CD4-positive, alpha-beta memory T cell (primary cell): ENCODE measurements at regions of chr18 and their contacts with region 1.

Region 1: GRCh38 chr18:58768293-58768974 is 96.2 kb upstream of the ZNF532 start:
- DNase-seq: peak in 4 of 5 donors; percentile 53 to 61 (median 57)
- H3K4me3 ChIP-seq: peak overlapping the region in 1 of 2 donors; percentile 12
- H3K4me3 Mint-ChIP-seq: peak overlapping the region in 7 of 8 donors; percentile 62 to 83 (median 67)
- H3K27ac ChIP-seq: no peak overlapping the region
- H3K27ac Mint-ChIP-seq: no peak overlapping the region
- H3K4me1 ChIP-seq: peaks cover 15% of the 10 kb centered on the region
- H3K4me1 Mint-ChIP-seq: peaks cover 3 to 15% (median 10%) of the 10 kb centered on the region in 4 donors
- H3K27me3 ChIP-seq: peaks cover 4% of the 10 kb centered on the region
- H3K27me3 Mint-ChIP-seq: peaks cover 23 to 31% of the 10 kb centered on the region in 2 donors

Region 2: DNA sequence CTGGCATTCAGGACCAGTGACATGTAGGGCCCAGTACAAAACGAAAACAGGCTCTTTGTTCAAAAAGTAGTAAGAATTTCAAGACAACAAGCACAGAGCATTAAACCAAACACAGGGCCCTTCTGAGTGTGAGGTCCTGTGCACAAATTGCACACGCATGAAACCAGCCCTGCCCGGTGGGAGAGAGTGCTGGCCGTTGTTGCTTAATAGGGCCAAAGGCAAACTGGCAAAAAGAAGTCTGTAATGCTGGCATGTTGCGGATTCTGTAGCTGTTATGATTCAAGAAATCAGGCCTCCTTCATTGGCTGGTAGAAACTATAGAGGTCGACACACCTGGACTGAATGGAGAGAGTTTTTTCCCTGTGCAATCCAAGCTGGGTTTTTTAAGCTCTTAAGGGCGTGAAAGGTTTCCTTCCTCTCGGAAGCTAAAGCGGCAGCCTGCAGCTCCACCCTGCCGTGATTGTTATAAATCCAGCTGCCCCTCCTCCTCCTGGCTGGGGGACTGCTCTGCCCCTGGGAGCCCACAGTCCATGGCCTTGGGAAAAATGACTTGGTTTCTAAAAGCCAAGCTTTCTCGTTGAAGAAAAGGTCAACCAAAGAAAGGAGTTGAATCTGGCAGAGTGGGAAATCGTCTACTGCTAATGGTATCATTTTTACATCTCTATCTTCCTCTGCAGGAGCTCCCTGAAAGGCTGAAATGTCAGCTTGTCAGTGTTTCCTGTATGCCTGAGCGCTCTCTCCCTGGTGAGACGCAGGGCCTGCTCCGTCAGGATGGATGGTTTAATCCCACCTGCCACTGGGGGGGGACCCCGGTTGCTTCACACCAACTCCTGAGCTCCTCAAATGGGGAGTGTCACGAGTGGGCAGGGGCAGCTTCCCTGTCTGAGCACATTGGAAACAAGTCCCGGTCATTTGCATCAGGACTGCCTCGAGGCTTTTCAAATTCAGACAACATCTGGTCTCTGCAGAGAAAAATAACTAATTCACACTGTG is 283.1 kb before region 1 on chr18:
- CTCF ChIA-PET with region 1: interaction called, 11 read pairs
- POLR2A ChIA-PET with region 1: no interaction called
- intact Hi-C with region 1: no loop called
- DNase-seq: no peak
- H3K4me3 ChIP-seq: no peak overlapping the region
- H3K4me3 Mint-ChIP-seq: peak overlapping the region in 1 of 8 donors; percentile 48
- H3K27ac ChIP-seq: no peak overlapping the region
- H3K27ac Mint-ChIP-seq: peak overlapping the region in 1 of 7 donors; percentile 64
- H3K4me1 ChIP-seq: no peaks in the 10 kb centered on the region
- H3K4me1 Mint-ChIP-seq: no peaks in the 10 kb centered on the region
- H3K27me3 ChIP-seq: peaks cover 8% of the 10 kb centered on the region
- H3K27me3 Mint-ChIP-seq: peaks cover 3 to 8% of the 10 kb centered on the region in 2 donors

Region 3: GRCh38 chr18:58529714-58530354 is 238.6 kb before region 1 on chr18:
- CTCF ChIA-PET with region 1: interaction called, 827 read pairs
- POLR2A ChIA-PET with region 1: interaction called, 28 read pairs
- intact Hi-C with region 1: loop called (anchors 1 kb)
- DNase-seq: peak; percentile 49 to 68 (median 62)
- H3K4me3 ChIP-seq: no peak overlapping the region
- H3K4me3 Mint-ChIP-seq: no peak overlapping the region
- H3K27ac ChIP-seq: no peak overlapping the region
- H3K27ac Mint-ChIP-seq: no peak overlapping the region
- H3K4me1 ChIP-seq: peaks cover 4% of the 10 kb centered on the region
- H3K4me1 Mint-ChIP-seq: peaks cover 4 to 5% (median 5%) of the 10 kb centered on the region in 4 donors
- H3K27me3 ChIP-seq: no peaks in the 10 kb centered on the region
- H3K27me3 Mint-ChIP-seq: peaks cover 0 to 3% of the 10 kb centered on the region in 2 donors

Region 4: DNA sequence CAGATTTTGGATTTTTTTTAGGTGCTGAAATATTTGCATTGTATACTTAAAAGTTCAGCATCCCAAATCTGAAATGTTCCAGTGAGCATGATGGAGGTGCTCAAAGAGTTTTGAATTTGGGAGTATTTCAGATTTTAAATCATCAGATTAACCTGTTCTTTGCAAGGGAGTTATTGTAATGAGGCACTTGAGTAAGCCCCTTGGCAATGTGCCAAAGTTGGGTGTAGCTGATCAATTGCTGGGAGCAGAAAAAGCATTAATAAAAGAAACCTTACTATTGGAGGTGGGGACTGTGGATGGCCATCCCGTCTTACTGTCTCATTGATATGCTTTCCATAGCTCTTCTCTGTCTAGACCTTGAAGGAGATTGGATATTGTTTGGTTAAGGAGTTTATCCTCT is 68.9 kb before region 1 on chr18:
- CTCF ChIA-PET with region 1: interaction called, 10 read pairs
- POLR2A ChIA-PET with region 1: no interaction called
- intact Hi-C with region 1: no loop called
- DNase-seq: peak in 1 of 5 donors; percentile 24
- H3K4me3 ChIP-seq: no peak overlapping the region
- H3K4me3 Mint-ChIP-seq: no peak overlapping the region
- H3K27ac ChIP-seq: no peak overlapping the region
- H3K27ac Mint-ChIP-seq: no peak overlapping the region
- H3K4me1 ChIP-seq: peaks cover 56% of the 10 kb centered on the region
- H3K4me1 Mint-ChIP-seq: peaks cover 11 to 41% (median 33%) of the 10 kb centered on the region in 4 donors
- H3K27me3 ChIP-seq: no peaks in the 10 kb centered on the region
- H3K27me3 Mint-ChIP-seq: no peaks in the 10 kb centered on the region

Region 5: GRCh38 chr18:58754544-58755068 is 13.8 kb before region 1 on chr18:
- CTCF ChIA-PET with region 1: interaction called, 42 read pairs
- POLR2A ChIA-PET with region 1: no interaction called
- intact Hi-C with region 1: no loop called
- DNase-seq: no peak
- H3K4me3 ChIP-seq: no peak overlapping the region
- H3K4me3 Mint-ChIP-seq: no peak overlapping the region
- H3K27ac ChIP-seq: no peak overlapping the region
- H3K27ac Mint-ChIP-seq: peak overlapping the region in 4 of 7 donors; percentile 1 to 74 (median 54)
- H3K4me1 ChIP-seq: peaks cover 10% of the 10 kb centered on the region
- H3K4me1 Mint-ChIP-seq: peaks cover 12 to 36% (median 31%) of the 10 kb centered on the region in 4 donors
- H3K27me3 ChIP-seq: no peaks in the 10 kb centered on the region
- H3K27me3 Mint-ChIP-seq: no peaks in the 10 kb centered on the region